ENCODE measurements at regions of chr10 and their contacts with region 1.

Region 1: GRCh38 chr10:96513698-96514561 is at the start of gene TLL2:
- DNase-seq: peak; percentile 87
- H3K4me3 ChIP-seq: peak within 1 kb of the TSS; percentile 29 to 49
- H3K27ac ChIP-seq: peak within 1 kb of the TSS in 1 of 2 donors; percentile 18
- H3K4me1 ChIP-seq: no peaks in the 10 kb centered on the region
- H3K27me3 ChIP-seq: no peaks in the 10 kb centered on the region
- CTCF ChIP-seq: peak; percentile 19 to 90 (median 84)
- POLR2A ChIP-seq: peak; percentile 43
- total RNA-seq, gene TLL2: 0.28 to 0.32 TPM

Region 2: DNA sequence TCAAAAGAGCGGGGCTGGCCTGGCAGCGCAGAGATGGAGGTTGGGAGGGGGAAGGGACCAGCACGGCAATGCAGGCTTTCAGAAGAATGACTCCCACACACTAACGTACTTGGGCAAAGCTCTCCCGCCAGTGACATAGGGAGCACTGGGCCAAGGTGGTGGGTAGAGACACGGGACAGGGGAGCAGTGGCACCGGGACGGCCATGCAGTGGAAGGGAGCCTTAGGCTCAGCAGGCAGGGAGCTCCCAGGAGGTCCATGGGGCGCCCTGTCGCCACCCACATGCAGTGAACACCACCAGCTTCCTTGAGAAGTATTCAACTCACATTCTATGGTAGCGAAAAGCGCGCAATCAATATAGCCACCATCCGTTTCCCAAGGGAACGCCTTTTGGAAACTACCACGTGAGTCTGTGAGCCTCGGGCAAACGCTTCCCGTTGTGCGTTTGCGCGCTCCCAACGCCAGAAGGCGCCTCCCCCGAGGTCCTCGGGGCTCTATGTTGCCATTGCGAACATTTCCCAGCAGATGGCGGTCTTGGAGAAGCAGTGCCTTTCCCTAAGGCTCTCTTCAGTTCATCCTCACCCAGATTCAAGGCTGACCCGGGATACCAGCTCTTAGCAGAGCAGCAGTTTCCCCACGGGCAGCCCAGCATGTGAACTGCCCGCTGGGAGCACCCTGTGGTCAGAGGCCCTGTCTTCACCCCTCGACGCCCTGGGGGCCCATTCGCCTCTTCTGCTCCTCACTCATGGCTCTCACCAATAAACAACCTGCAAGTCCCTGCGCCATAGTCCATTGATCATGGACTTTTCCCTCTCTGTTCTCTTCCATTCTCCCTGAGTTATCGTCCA is 138.7 kb before region 1 on chr10:
- intact Hi-C with region 1: loop called (anchors 5 kb)
- DNase-seq: peak; percentile 83
- H3K4me3 ChIP-seq: peak overlapping the region; percentile 12 to 30
- H3K27ac ChIP-seq: no peak overlapping the region
- H3K4me1 ChIP-seq: no peaks in the 10 kb centered on the region
- H3K27me3 ChIP-seq: no peaks in the 10 kb centered on the region
- CTCF ChIP-seq: peak; percentile 66 to 97 (median 92)
- POLR2A ChIP-seq: no peak

Measured in prostate gland (tissue), 2 donors.